Transverse colon (tissue), 4 donors: ENCODE measurements at regions of chr10 and their contacts with region 1.

Region 1: DNA sequence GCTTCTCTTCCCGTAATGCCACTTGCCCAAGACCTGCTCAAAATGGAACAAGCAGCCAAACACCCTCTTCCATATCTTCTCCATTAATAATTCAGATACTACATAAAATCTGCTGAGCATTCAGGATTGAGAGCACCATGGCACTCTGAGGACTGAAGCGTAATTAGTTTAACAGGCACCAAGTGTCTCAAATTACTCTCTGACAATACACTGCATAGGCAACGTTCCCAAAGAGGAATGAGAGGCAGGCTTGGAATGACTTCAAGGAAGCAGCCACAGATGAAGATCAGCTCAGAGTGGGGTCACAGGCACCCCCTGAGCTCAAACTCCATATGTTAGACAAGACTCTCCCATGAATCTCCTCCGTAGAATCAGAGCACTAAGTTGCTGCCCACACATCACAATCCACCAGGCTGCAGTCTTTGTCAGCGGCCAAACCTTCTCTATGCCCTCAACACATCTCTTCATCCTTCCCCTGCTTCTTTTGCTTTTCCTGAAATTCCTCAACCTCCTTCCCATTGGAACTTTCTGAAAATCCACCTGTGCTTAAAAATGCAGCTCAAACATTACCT is 4.7 kb upstream of the ABLIM1 start:
- DNase-seq: no peak
- H3K4me3 ChIP-seq: no peak overlapping the region
- H3K27ac ChIP-seq: no peak overlapping the region
- H3K4me1 ChIP-seq: peaks cover 0 to 3% (median 1%) of the 10 kb centered on the region in 4 donors
- H3K27me3 ChIP-seq: no peaks in the 10 kb centered on the region
- CTCF ChIP-seq: no peak
- EP300 ChIP-seq: no peak
- POLR2A ChIP-seq: no peak

Region 2: GRCh38 chr10:114704679-114705078 is 41.9 kb after region 1 on chr10:
- in situ Hi-C with region 1: no loop called
- intact Hi-C with region 1: loop called (anchors 1 kb)
- DNase-seq: no peak
- H3K4me3 ChIP-seq: no peak overlapping the region
- H3K27ac ChIP-seq: no peak overlapping the region
- H3K4me1 ChIP-seq: no peaks in the 10 kb centered on the region
- H3K27me3 ChIP-seq: no peaks in the 10 kb centered on the region
- CTCF ChIP-seq: no peak
- EP300 ChIP-seq: no peak
- POLR2A ChIP-seq: no peak